PC-9 (cell line): ENCODE measurements at regions of chr7 and their contacts with region 1.

Region 1: GRCh38 chr7:103598326-103598905 is 152.4 kb upstream of the SLC26A5 start:
- DNase-seq: no peak
- H3K4me3 ChIP-seq: no peak overlapping the region
- H3K27ac ChIP-seq: no peak overlapping the region
- H3K4me1 ChIP-seq: no peaks in the 10 kb centered on the region
- H3K27me3 ChIP-seq: no peaks in the 10 kb centered on the region
- CTCF ChIP-seq: no peak

Region 2: DNA sequence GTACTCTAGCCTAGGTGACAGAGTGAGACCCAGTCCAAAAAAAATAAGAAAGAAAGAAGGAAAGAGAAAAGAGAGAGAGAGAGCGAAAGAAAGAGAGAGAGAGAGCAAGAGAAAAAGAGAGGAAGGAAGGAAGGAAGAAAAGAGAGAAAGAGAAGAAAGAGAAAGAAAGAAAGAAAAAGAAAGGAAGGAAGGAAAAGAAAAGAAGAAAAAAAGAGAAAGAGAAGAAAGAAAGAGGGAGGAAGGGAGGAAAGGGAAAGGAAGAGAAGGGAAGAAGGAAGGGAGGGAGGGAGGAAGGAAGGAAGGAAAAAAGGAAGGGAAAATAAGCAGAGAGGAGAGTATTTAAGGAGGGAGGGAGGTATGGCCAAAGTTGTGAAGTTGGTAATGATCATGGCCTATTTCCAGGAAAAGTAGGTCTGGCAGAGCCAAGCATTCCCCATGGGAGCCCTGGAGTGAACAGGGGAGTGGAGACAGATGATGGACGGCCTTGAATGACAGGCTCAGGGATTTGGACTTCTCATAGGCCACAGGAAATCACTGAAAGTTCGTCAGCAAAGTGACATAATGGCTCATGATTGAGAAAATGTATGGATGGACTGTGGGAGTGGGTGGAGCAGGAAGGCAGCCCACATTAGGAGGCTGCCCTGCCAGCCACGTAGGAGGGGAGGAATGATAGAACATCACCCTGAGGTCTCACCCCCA is 1825.8 kb before region 1 on chr7:
- CTCF ChIA-PET with region 1: no interaction called
- POLR2A ChIA-PET with region 1: no interaction called
- intact Hi-C with region 1: no loop called
- DNase-seq: no peak
- H3K4me3 ChIP-seq: no peak overlapping the region
- H3K27ac ChIP-seq: no peak overlapping the region
- H3K4me1 ChIP-seq: no peaks in the 10 kb centered on the region
- H3K27me3 ChIP-seq: peaks cover 23% of the 10 kb centered on the region; the same call in 1 of the 2 replicates
- CTCF ChIP-seq: no peak

Region 3: GRCh38 chr7:102942181-102942866 is 656.1 kb before region 1 on chr7:
- CTCF ChIA-PET with region 1: no interaction called
- POLR2A ChIA-PET with region 1: no interaction called
- intact Hi-C with region 1: no loop called
- DNase-seq: no peak
- H3K4me3 ChIP-seq: no peak overlapping the region
- H3K27ac ChIP-seq: no peak overlapping the region
- H3K4me1 ChIP-seq: no peaks in the 10 kb centered on the region
- H3K27me3 ChIP-seq: no peaks in the 10 kb centered on the region
- CTCF ChIP-seq: no peak

Region 4: DNA sequence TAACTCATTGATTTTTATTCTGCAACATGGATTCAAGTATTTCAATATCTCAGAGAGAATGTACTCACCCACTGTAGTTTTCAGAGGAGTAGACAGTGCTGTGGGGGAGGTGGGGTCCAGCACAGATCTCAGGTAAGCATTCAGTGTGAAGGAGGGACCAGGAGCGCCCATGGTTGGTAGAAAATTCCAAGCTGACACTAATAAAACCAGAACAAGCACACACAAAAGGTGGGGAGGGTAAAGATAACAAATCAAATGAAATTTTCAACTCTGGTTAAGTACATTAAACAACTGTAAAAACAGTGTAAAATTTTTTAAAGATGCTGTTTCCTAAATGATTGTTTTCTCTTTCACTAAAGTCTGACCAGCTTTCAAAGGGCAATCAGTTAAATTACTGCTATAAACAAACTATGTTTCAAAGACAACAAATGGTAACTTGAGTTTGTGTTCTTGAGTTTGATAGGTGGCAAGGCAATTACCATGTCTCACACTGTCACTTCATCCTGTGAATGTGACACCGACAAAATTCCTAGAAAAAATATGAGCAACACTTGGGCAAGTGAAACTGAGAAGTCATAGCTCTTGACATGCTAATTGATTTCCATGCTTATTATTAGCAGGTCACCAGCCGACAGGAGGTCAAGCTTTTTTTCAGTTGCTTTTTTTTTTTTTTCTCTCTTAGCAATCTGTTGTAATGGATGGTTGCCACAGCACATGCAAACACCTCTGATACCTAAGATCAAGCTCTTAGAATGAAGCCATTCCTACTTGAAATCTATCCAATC is 53.4 kb after region 1 on chr7:
- CTCF ChIA-PET with region 1: no interaction called
- POLR2A ChIA-PET with region 1: no interaction called
- intact Hi-C with region 1: loop called (anchors 5 kb)
- DNase-seq: no peak
- H3K4me3 ChIP-seq: no peak overlapping the region
- H3K27ac ChIP-seq: no peak overlapping the region
- H3K4me1 ChIP-seq: no peaks in the 10 kb centered on the region
- H3K27me3 ChIP-seq: no peaks in the 10 kb centered on the region
- CTCF ChIP-seq: no peak